ENCODE measurements at regions of chr19 and their contacts with region 1.

Region 1: GRCh38 chr19:40716655-40717324 is at the starts of genes COQ8B and ITPKC:
- DNase-seq: peak; percentile 96 to 100 (median 99)
- ATAC-seq: peak; percentile 88
- H3K4me3 ChIP-seq: peak within 1 kb of the TSS; percentile 75
- H3K4me3 Mint-ChIP-seq: peak within 1 kb of the TSS; percentile 87 to 99 (median 94)
- H3K27ac ChIP-seq: peak within 1 kb of the TSS; percentile 92
- H3K27ac Mint-ChIP-seq: peak within 1 kb of the TSS; percentile 94 to 99 (median 97)
- H3K4me1 ChIP-seq: peaks cover 39 to 44% of the 10 kb centered on the region in 2 donors
- H3K4me1 Mint-ChIP-seq: peaks cover 42 to 74% (median 67%) of the 10 kb centered on the region in 7 donors
- H3K27me3 ChIP-seq: no peaks in the 10 kb centered on the region
- H3K27me3 Mint-ChIP-seq: no peaks in the 10 kb centered on the region
- total RNA-seq, gene COQ8B: 26.2 to 48.3 (median 43.8) TPM
- total RNA-seq, gene ITPKC: 4.9 to 9.0 (median 7.3) TPM

Region 2: DNA sequence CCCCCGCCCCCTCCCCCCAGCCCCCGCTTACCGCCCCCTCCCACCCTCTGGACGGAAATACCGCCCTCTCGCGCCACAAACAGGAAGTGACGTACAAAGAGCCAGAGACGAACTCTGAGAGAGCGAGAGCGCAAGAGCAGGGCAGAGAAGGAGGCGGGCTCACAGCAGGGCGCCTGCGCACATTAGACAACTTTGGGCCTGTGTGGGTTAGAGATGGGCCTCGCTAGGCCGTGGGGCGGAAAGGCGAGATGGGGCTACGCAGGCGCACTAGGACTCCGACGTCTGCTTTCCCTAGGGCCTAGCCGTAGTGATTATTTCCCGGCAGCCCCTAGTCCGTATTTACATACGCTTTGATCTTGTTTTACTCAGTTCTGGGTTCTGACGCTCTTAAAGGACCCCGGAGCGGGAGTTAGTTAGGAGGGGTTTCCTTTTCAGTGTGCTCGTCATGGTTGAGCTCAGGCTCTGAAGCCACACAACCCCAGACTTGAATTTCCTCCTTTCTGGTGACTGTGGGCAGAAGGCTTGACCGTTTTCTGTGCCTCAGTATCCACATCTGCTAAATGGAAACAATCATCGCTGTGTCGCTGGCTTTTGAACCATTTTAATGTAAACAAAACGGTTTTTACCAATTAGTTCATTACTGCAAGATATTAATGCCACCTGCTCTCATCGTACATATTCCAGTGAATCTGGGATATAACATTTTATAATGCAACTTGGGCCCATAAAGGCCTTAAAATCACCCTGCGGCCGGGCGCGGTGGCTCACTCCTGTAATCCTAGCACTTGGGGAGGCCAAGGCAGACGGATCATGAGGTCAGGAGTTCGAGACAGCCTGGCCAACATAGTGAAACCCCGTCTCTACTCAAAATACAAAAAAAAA is 431.2 kb before region 1 on chr19:
- CTCF ChIA-PET with region 1: no interaction called
- POLR2A ChIA-PET with region 1: no interaction called
- intact Hi-C with region 1: loop called in 1 of 2 experiments (anchors 10 kb)
- DNase-seq: peak; percentile 84 to 100 (median 99)
- ATAC-seq: peak; percentile 89
- H3K4me3 ChIP-seq: peak overlapping the region; percentile 81
- H3K4me3 Mint-ChIP-seq: peak overlapping the region; percentile 84 to 97 (median 92)
- H3K27ac ChIP-seq: peak overlapping the region; percentile 97
- H3K27ac Mint-ChIP-seq: peak overlapping the region; percentile 96 to 100 (median 99)
- H3K4me1 ChIP-seq: peaks cover 13 to 38% of the 10 kb centered on the region in 2 donors
- H3K4me1 Mint-ChIP-seq: peaks cover 24 to 59% (median 49%) of the 10 kb centered on the region in 7 donors
- H3K27me3 ChIP-seq: no peaks in the 10 kb centered on the region
- H3K27me3 Mint-ChIP-seq: peaks cover 0 to 2% (median 0%) of the 10 kb centered on the region in 5 donors

Region 3: DNA sequence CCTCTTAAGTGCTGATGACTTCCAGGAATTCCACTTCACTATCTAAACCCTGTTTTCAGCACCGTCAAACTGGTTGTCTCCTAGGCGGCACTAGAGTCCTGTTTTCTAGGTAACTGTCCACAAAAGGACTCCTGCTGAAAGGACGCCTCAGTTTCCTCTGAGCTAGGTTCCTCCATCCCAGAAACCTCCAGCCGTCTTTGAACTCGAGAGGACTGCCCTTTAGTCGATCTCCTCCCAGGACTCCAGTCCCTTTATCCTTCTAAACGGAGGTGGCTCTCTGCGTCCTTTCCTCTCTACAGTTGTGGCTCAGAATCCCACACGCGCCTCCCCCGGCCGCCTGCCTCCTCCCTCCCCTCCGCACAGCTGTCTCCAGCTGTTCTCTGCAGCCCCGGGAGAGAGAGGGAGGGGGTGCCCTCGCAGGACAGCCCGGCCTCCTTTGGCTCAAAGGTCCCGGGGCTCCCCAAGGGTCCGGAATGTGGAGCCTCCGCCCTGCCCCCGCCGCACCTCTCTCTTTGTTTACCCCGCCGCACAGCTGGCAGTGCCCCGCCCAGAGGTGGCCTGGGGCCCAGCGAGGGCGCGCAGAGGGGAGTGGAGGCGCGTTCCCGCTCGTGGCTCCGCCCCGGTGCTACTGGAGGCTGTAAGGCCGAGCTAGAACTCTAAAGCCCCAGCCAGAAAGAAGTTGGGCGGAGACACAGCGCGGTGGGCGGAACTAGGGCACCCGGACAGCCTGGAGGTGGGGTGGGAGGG is 113.2 kb before region 1 on chr19:
- CTCF ChIA-PET with region 1: no interaction called
- POLR2A ChIA-PET with region 1: no interaction called
- intact Hi-C with region 1: loop called in 1 of 2 experiments (anchors 2 kb)
- DNase-seq: peak; percentile 82 to 96 (median 93)
- ATAC-seq: peak; percentile 86
- H3K4me3 ChIP-seq: peak overlapping the region; percentile 72
- H3K4me3 Mint-ChIP-seq: peak overlapping the region; percentile 84 to 98 (median 88)
- H3K27ac ChIP-seq: peak overlapping the region; percentile 35
- H3K27ac Mint-ChIP-seq: peak overlapping the region; percentile 72 to 93 (median 86)
- H3K4me1 ChIP-seq: peaks cover 54 to 61% of the 10 kb centered on the region in 2 donors
- H3K4me1 Mint-ChIP-seq: peaks cover 20 to 84% (median 71%) of the 10 kb centered on the region in 7 donors
- H3K27me3 ChIP-seq: peaks cover 10 to 21% of the 10 kb centered on the region in 2 donors
- H3K27me3 Mint-ChIP-seq: peaks cover 24 to 39% (median 30%) of the 10 kb centered on the region in 5 donors

Region 4: DNA sequence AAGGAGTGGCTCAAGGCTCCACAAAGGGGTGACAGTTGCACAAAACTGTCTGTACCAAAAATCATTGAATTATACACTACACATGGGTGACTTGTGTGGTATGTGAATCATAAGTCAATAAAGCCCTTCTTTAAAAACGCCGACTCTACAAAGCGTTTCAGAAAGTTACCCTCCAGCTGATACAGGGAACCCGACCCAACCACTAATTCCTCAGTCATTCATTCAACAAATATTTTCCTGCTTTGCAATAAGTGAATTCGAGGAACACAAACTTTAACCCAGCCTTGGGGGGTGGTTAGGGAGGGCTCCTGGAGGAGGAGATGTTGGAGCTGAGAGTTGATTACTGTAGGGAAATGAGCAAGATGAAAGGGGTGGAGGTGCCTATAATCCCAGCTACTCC is 83.6 kb before region 1 on chr19:
- CTCF ChIA-PET with region 1: no interaction called
- POLR2A ChIA-PET with region 1: no interaction called
- intact Hi-C with region 1: no loop called
- DNase-seq: no peak
- ATAC-seq: no peak
- H3K4me3 ChIP-seq: no peak overlapping the region
- H3K4me3 Mint-ChIP-seq: no peak overlapping the region
- H3K27ac ChIP-seq: no peak overlapping the region
- H3K27ac Mint-ChIP-seq: peak overlapping the region in 2 of 9 donors; percentile 11 to 78
- H3K4me1 ChIP-seq: peaks cover 4 to 5% of the 10 kb centered on the region in 2 donors
- H3K4me1 Mint-ChIP-seq: peaks cover 7 to 19% (median 16%) of the 10 kb centered on the region in 7 donors
- H3K27me3 ChIP-seq: no peaks in the 10 kb centered on the region
- H3K27me3 Mint-ChIP-seq: peaks cover 0 to 20% (median 0%) of the 10 kb centered on the region in 5 donors

Region 5: DNA sequence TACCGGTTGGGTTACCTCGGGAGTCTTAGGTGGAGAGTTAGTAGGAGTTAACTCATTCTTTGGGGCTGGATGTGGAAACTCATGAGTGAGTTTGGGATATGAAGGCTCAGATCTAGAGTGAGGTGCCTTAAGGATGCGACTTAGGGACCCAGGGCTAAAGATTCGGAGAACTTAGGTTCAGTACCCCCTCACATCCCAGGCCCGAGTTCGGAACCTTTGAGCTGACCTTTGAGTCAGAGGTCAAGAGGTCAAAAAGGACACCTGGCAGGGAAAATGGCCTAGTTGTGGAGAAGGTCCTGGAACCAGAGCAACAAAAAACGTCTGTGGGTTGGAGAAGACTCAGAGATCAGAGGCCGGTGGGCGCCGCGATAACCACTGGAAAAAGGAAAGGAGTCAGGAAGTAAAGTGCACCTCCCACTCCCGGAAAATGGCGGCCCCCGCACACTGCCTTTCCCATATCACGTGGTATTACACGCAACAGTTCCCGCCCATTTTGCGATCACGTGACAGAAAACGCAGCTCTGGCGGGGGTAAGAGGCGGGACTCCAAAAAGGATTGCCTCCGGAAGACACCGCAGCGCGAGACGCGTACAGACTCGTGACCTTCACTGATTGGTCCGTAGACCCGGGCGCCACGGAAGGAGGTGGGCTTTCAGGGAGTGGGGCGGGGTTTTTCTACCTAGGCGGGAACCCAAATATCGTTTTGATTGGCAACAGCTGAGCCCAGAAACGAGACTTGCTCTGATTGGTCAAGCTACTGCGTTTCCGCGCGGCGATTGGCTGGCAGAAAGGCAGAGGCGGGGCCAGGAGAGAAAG is 33.5 kb after region 1 on chr19 and contains the start of gene ACTMAP:
- CTCF ChIA-PET with region 1: interaction called, 3 read pairs
- POLR2A ChIA-PET with region 1: interaction called, 19 read pairs
- intact Hi-C with region 1: loop called (anchors 1 kb)
- DNase-seq: peak; percentile 95 to 100 (median 100)
- ATAC-seq: peak; percentile 93
- H3K4me3 ChIP-seq: peak within 1 kb of the TSS; percentile 96
- H3K4me3 Mint-ChIP-seq: peak within 1 kb of the TSS; percentile 93 to 100 (median 96)
- H3K27ac ChIP-seq: peak within 1 kb of the TSS; percentile 84
- H3K27ac Mint-ChIP-seq: peak within 1 kb of the TSS; percentile 90 to 99 (median 98)
- H3K4me1 ChIP-seq: peaks cover 11 to 27% of the 10 kb centered on the region in 2 donors
- H3K4me1 Mint-ChIP-seq: peaks cover 31 to 43% (median 42%) of the 10 kb centered on the region in 7 donors
- H3K27me3 ChIP-seq: no peaks in the 10 kb centered on the region
- H3K27me3 Mint-ChIP-seq: no peaks in the 10 kb centered on the region
- total RNA-seq, gene ACTMAP: 5.5 to 13.7 (median 7.8) TPM

Region 6: GRCh38 chr19:40974633-40975037 is 257.8 kb after region 1 on chr19:
- CTCF ChIA-PET with region 1: no interaction called
- POLR2A ChIA-PET with region 1: no interaction called
- intact Hi-C with region 1: loop called in 1 of 2 experiments (anchors 2 kb)
- DNase-seq: peak; percentile 54 to 84 (median 76)
- ATAC-seq: peak; percentile 87
- H3K4me3 ChIP-seq: no peak overlapping the region
- H3K4me3 Mint-ChIP-seq: peak overlapping the region in 1 of 10 donors; percentile 45
- H3K27ac ChIP-seq: no peak overlapping the region
- H3K27ac Mint-ChIP-seq: peak overlapping the region in 3 of 9 donors; percentile 53 to 74 (median 63)
- H3K4me1 ChIP-seq: peaks cover 16 to 19% of the 10 kb centered on the region in 2 donors
- H3K4me1 Mint-ChIP-seq: peaks cover 13 to 53% (median 27%) of the 10 kb centered on the region in 7 donors
- H3K27me3 ChIP-seq: no peaks in the 10 kb centered on the region
- H3K27me3 Mint-ChIP-seq: peaks cover 2 to 38% (median 3%) of the 10 kb centered on the region in 5 donors

Measured in naive thymus-derived CD4-positive, alpha-beta T cell (primary cell).